Esophagus muscularis mucosa (tissue), 4 donors: ENCODE measurements at regions of chr2 and their contacts with region 1.

Region 1: GRCh38 chr2:158903711-158904443 is 64.6 kb upstream of the TANC1 start:
- DNase-seq: peak; percentile 7
- H3K4me3 ChIP-seq: no peak overlapping the region
- H3K27ac ChIP-seq: no peak overlapping the region
- H3K4me1 ChIP-seq: peaks cover 0 to 23% (median 17%) of the 10 kb centered on the region in 4 donors
- H3K27me3 ChIP-seq: no peaks in the 10 kb centered on the region
- CTCF ChIP-seq: no peak
- EP300 ChIP-seq: no peak
- POLR2A ChIP-seq: no peak

Region 2: GRCh38 chr2:158539176-158540005 is 364.5 kb before region 1 on chr2:
- intact Hi-C with region 1: no loop called
- DNase-seq: no peak
- H3K4me3 ChIP-seq: no peak overlapping the region
- H3K27ac ChIP-seq: peak overlapping the region; percentile 21 to 45 (median 37)
- H3K4me1 ChIP-seq: peaks cover 15 to 23% (median 16%) of the 10 kb centered on the region in 4 donors
- H3K27me3 ChIP-seq: no peaks in the 10 kb centered on the region
- CTCF ChIP-seq: no peak
- EP300 ChIP-seq: no peak
- POLR2A ChIP-seq: no peak

Region 3: DNA sequence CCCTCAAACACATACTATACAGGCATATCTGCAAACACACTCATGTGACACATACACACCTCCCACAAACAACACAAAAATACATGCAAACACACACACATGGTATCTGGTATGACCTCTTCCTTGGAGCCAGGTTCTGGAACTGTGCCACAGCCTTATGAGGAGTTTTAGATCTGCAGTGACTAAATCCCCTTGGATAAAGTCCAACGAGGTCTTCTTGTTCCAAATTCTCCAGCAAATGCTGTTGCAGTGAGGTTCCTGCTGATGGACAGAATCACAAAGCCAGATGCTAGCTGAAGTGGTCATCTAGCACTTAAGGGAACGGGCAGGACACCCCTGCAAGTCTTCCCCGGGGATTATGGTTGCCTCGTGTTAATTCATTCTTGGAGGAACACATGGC is 163.3 kb before region 1 on chr2:
- intact Hi-C with region 1: no loop called
- DNase-seq: no peak
- H3K4me3 ChIP-seq: no peak overlapping the region
- H3K27ac ChIP-seq: no peak overlapping the region
- H3K4me1 ChIP-seq: peaks cover 0 to 26% (median 5%) of the 10 kb centered on the region in 4 donors
- H3K27me3 ChIP-seq: peaks cover 0 to 4% (median 0%) of the 10 kb centered on the region in 4 donors
- CTCF ChIP-seq: no peak
- EP300 ChIP-seq: no peak
- POLR2A ChIP-seq: no peak

Region 4: GRCh38 chr2:158990397-158991209 is 86.7 kb after region 1 on chr2:
- intact Hi-C with region 1: no loop called
- DNase-seq: peak; percentile 60
- H3K4me3 ChIP-seq: no peak overlapping the region
- H3K27ac ChIP-seq: no peak overlapping the region
- H3K4me1 ChIP-seq: peaks cover 29 to 53% (median 44%) of the 10 kb centered on the region in 4 donors
- H3K27me3 ChIP-seq: no peaks in the 10 kb centered on the region
- CTCF ChIP-seq: no peak
- EP300 ChIP-seq: no peak
- POLR2A ChIP-seq: no peak

Region 5: DNA sequence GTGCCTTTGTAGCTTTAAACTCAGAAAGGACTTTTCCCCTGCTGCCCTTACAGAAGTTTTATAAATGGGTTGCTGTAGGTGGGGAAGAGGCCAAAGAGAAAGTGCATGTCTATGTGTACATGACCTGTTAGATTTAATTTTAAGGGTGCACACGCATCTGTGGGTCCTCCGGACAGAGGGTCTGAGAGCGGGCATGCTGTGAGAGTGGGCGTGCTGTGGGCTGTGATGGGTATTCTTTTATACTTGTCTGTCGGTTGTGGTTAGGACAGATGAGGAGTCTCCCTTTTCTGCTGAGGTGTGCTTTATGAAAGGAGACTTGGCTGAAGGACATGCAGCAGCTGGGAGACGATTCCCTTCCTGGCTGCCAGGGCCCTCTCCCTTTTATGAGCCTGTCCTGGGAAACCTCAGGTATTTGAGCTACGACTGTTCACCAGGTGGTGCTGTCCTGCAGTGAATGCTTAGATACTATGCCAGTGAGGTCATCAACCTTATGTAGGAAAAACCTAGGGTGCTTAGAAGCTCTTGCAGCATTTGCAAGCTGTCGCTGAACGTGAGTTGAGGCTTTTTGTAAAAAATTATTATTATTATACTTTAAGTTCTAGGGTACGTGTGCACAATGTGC is 132.0 kb after region 1 on chr2:
- intact Hi-C with region 1: loop called (anchors 10 kb)
- DNase-seq: peak; percentile 85
- H3K4me3 ChIP-seq: no peak overlapping the region
- H3K27ac ChIP-seq: no peak overlapping the region
- H3K4me1 ChIP-seq: peaks cover 25 to 38% (median 35%) of the 10 kb centered on the region in 4 donors
- H3K27me3 ChIP-seq: no peaks in the 10 kb centered on the region
- CTCF ChIP-seq: peak in 2 of 3 experiments; percentile 32 to 37
- EP300 ChIP-seq: no peak
- POLR2A ChIP-seq: no peak

Region 6: GRCh38 chr2:159118115-159118858 is 214.4 kb after region 1 on chr2:
- intact Hi-C with region 1: loop called (anchors 2 kb)
- DNase-seq: peak; percentile 96
- H3K4me3 ChIP-seq: no peak overlapping the region
- H3K27ac ChIP-seq: peak overlapping the region in 3 of 4 donors; percentile 3 to 50 (median 37)
- H3K4me1 ChIP-seq: peaks cover 22 to 43% (median 27%) of the 10 kb centered on the region in 4 donors
- H3K27me3 ChIP-seq: no peaks in the 10 kb centered on the region
- CTCF ChIP-seq: peak; percentile 88 to 95 (median 91)
- EP300 ChIP-seq: no peak
- POLR2A ChIP-seq: no peak